ENCODE measurements at regions of chr3 and their contacts with region 1.

Region 1: DNA sequence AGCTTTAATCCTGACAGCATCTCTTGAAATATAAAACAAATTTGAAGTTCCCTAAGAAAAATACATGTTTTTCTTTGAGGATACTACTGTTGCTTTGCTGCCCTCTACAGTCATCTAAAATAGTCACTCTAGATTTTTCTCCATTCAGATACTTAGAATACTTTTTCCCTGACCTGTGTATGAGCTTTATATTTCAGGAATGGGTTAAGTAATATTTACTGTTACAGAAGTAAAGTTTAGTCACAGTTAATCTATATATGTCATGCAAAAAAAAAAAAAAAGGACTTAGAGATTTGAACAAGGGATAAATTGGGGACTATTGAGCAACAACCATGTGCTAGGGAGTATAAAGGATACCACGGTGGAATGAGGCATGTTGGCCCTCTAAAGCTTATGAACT is 8.8 kb downstream of the NECTIN3 start:
- DNase-seq: peak; percentile 61
- H3K4me3 Mint-ChIP-seq: no peak overlapping the region
- H3K27ac Mint-ChIP-seq: no peak overlapping the region
- H3K4me1 Mint-ChIP-seq: peaks cover 5% of the 10 kb centered on the region
- H3K27me3 Mint-ChIP-seq: no peaks in the 10 kb centered on the region
- CTCF ChIP-seq: peak; percentile 65

Region 2: DNA sequence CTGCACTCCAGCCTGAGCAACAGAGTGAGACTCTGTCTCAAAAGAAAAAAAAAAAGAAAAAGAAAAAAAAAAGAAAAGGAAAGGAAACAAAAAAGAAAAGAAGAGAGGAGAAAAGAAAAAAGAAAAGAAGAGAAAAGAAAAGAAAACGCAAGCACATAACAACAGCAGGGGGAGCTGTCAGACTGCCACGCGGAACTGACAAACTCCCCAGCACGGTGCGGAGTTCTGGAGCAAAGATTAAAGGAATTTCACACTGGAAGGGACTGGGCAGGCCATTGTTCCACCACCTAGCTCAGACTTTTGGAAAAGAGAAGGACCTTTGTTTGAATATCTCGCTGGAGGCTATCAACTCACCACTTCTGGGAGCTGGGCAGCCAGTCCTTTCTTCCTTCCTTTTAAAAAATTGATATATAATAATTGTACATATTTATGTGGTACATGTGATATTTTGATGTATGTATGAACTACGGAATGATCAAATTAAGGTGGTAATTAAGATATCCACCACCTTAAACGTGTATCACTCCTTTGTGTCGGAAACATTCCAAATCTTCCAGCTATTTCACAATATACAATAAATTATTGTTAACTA is 1804.6 kb before region 1 on chr3:
- CTCF ChIA-PET with region 1: interaction called, 5 read pairs
- POLR2A ChIA-PET with region 1: no interaction called
- intact Hi-C with region 1: loop called (anchors 5 kb)
- DNase-seq: peak; percentile 58
- H3K4me3 Mint-ChIP-seq: no peak overlapping the region
- H3K27ac Mint-ChIP-seq: no peak overlapping the region
- H3K4me1 Mint-ChIP-seq: no peaks in the 10 kb centered on the region
- H3K27me3 Mint-ChIP-seq: no peaks in the 10 kb centered on the region
- CTCF ChIP-seq: peak; percentile 70

Region 3: DNA sequence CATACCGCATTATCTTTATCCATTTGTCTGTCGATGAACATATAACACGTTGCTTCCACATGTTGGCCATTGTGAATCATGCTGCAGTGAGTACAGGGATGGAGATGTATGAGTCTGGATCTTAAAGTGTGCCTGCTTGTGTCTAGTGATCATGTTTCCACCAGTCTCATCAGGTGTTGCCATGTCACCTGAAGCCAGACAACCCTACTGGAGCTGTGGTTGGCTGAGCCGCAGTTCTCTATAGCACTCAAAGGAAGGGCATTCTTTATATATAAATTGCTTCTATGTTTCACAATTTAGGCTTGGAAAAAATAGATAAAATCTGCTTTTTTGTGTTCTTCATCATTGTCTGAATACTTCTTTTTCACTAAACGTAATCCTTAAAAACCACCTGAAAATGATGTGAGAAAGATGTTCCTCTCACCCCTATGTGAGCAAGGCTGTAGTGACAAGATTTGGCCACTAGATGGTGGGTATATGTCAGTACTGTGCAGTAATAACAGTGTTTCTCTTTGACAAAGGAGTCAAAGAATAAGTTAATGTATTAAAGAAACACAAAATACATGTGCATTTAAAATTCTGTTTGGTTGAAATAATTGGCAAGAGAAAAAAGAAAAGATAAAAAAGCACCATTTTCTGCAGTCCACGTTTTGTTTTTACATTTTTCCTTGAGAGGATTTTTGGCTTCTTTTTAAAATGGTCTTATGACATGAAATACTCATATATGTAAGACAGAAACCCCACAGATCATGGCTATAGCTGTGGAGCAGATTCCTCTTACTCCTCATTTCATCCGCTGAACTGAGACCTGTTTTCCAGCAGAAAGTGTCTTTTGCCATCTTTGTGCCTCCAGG is 1348.6 kb before region 1 on chr3:
- CTCF ChIA-PET with region 1: interaction called, 5 read pairs
- POLR2A ChIA-PET with region 1: no interaction called
- intact Hi-C with region 1: loop called (anchors 1 kb)
- DNase-seq: peak; percentile 72
- H3K4me3 Mint-ChIP-seq: no peak overlapping the region
- H3K27ac Mint-ChIP-seq: no peak overlapping the region
- H3K4me1 Mint-ChIP-seq: peaks cover 7% of the 10 kb centered on the region
- H3K27me3 Mint-ChIP-seq: no peaks in the 10 kb centered on the region
- CTCF ChIP-seq: peak; percentile 85

Region 4: DNA sequence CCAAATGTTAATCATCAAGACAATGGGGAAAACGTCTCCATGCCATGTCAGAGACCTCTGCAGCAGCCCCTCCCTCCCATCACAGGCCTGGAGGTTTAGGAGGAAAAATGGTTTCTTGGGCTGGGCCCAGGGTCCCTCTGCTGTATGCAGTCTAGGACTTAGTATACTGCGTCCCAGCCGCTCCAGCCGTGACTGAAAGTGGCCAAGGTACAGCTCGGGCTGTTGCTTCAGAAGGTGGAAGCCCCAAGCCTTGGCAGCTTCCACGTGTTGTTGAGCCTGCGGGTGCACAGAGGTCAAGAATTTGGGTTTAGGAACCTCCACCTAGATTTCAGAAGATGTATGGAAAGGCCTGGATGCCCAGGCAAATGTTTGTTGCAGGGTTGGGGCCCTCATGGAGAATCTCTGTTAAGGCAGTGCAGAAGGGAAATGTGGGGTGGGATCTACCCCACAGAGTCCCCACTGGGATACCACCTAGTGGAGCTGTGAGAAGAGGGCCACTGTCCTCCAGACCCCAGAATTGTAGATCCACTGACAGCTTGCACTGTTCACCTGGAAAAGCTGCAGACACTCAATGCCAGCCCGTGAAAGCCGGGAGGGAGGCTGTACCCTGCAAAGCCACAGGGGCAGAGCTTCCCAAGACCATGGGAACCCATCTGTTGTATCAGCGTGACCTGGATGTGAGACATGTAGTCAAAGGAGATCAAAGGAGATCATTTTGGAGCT is 16.2 kb after region 1 on chr3:
- CTCF ChIA-PET with region 1: interaction called, 11 read pairs
- POLR2A ChIA-PET with region 1: no interaction called
- intact Hi-C with region 1: no loop called
- DNase-seq: no peak
- H3K4me3 Mint-ChIP-seq: no peak overlapping the region
- H3K27ac Mint-ChIP-seq: no peak overlapping the region
- H3K4me1 Mint-ChIP-seq: peaks cover 20% of the 10 kb centered on the region
- H3K27me3 Mint-ChIP-seq: no peaks in the 10 kb centered on the region
- CTCF ChIP-seq: no peak

Region 5: GRCh38 chr3:111238885-111239284 is 158.5 kb after region 1 on chr3:
- CTCF ChIA-PET with region 1: no interaction called
- POLR2A ChIA-PET with region 1: no interaction called
- intact Hi-C with region 1: no loop called
- DNase-seq: no peak
- H3K4me3 Mint-ChIP-seq: no peak overlapping the region
- H3K27ac Mint-ChIP-seq: no peak overlapping the region
- H3K4me1 Mint-ChIP-seq: peaks cover 8% of the 10 kb centered on the region
- H3K27me3 Mint-ChIP-seq: no peaks in the 10 kb centered on the region
- CTCF ChIP-seq: no peak

Region 6: GRCh38 chr3:111326144-111326995 is 246.0 kb after region 1 on chr3:
- CTCF ChIA-PET with region 1: no interaction called
- POLR2A ChIA-PET with region 1: no interaction called
- intact Hi-C with region 1: no loop called
- DNase-seq: no peak
- H3K4me3 Mint-ChIP-seq: no peak overlapping the region
- H3K27ac Mint-ChIP-seq: no peak overlapping the region
- H3K4me1 Mint-ChIP-seq: peaks cover 12% of the 10 kb centered on the region
- H3K27me3 Mint-ChIP-seq: no peaks in the 10 kb centered on the region
- CTCF ChIP-seq: no peak

Region 7: GRCh38 chr3:111539351-111540331 is 459.2 kb after region 1 on chr3:
- CTCF ChIA-PET with region 1: interaction called, 11 read pairs
- POLR2A ChIA-PET with region 1: no interaction called
- intact Hi-C with region 1: no loop called
- DNase-seq: peak; percentile 64
- H3K4me3 Mint-ChIP-seq: no peak overlapping the region
- H3K27ac Mint-ChIP-seq: no peak overlapping the region
- H3K4me1 Mint-ChIP-seq: peaks cover 22% of the 10 kb centered on the region
- H3K27me3 Mint-ChIP-seq: no peaks in the 10 kb centered on the region
- CTCF ChIP-seq: peak; percentile 61